Activated T-helper 1 cell treated with anti-CD3 and anti-CD28 coated beads, Interleukin-12 subunit alpha, Interleukin-12 subunit beta, Interleukin-2, Interleukin-4 antibody, amounts not matched to agents 30 ng/mL and 10 ng/mL and 1 ng/mL, durations not matched to agents 14 hours and 24 hours and 36 hours (primary cell): ENCODE measurements at regions of chr7 and their contacts with region 1.

Region 1: GRCh38 chr7:87876040-87876868 is at the starts of genes DBF4 and SLC25A40:
- DNase-seq: peak; percentile 95
- H3K4me3 Mint-ChIP-seq: peak within 1 kb of the TSS; percentile 80
- H3K27ac Mint-ChIP-seq: peak within 1 kb of the TSS; percentile 98
- H3K4me1 Mint-ChIP-seq: peaks cover 54% of the 10 kb centered on the region
- H3K27me3 Mint-ChIP-seq: no peaks in the 10 kb centered on the region
- total RNA-seq, gene DBF4: 68.6 and 76.6 TPM in 2 replicates
- total RNA-seq, gene SLC25A40: 41.9 and 51.4 TPM in 2 replicates

Region 2: GRCh38 chr7:87059525-87060287 is 816.5 kb before region 1 on chr7 and contains the start of gene ELAPOR2:
- intact Hi-C with region 1: loop called (anchors 10 kb)
- DNase-seq: peak; percentile 70
- H3K4me3 Mint-ChIP-seq: peak within 1 kb of the TSS; percentile 70
- H3K27ac Mint-ChIP-seq: peak within 1 kb of the TSS; percentile 20
- H3K4me1 Mint-ChIP-seq: peaks cover 8% of the 10 kb centered on the region
- H3K27me3 Mint-ChIP-seq: peaks cover 17% of the 10 kb centered on the region
- total RNA-seq, gene ELAPOR2: 1.3 and 2.3 TPM in 2 replicates

Region 3: DNA sequence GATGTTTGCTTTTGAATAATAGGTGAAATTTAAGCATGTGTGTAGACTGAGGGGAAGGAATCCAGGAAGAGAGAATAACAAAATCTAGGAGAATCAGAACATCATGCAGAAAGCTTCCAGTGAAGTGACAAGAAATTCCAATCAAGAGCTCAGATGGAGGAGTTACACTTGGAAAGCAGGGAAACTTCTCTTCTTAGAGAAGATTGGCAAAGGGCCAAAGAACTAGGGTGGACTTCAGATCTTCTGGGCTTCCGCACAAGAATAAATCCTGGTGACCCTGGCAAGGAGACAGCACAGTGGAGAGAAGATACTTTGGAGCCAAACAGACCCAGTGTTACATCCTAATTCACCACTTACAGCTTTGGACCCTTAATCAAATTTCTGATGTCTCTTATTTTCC is 624.1 kb before region 1 on chr7:
- intact Hi-C with region 1: no loop called
- DNase-seq: no peak
- H3K4me3 Mint-ChIP-seq: no peak overlapping the region
- H3K27ac Mint-ChIP-seq: no peak overlapping the region
- H3K4me1 Mint-ChIP-seq: no peaks in the 10 kb centered on the region
- H3K27me3 Mint-ChIP-seq: peaks cover 9% of the 10 kb centered on the region

Region 4: DNA sequence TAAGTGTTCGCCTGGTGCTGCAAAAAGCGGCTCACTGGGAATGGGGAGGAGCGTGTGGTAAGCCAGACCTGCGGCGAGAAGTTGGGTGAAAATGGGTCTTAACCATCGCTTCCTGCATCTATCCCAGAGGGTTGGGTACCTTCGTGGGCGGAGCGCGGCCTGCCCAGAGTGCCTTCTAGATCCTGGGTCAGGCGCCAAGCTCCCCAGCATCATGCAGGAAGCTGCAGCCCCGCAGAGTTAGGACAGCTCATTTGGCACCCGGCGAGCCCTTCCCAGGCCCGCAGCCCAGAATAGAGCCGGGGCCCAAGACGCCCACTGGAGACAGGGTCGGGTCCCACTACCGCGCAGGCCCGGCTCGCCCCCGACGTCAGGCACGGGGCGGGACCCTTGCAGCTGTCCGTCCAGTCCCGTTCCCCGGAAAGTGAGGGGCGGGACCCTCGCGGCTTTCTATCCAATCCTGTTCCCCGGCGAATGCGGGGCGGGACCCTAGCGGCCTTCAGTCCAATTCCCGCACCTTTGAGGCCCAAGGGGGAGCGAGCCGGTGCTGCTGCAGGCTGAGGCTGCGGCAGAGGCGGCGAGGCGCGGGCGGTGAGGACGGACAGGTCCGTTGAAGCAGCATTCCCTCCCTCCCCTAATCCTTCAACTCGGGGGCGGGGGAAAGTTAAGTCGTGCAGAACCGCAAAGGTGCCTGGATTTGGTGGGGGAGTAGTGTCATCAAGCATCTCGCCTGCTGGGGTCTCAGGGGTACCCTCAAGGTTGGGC is 530.9 kb before region 1 on chr7 and contains the start of gene CROT:
- intact Hi-C with region 1: loop called (anchors 1 kb)
- DNase-seq: peak; percentile 93
- H3K4me3 Mint-ChIP-seq: peak within 1 kb of the TSS; percentile 92
- H3K27ac Mint-ChIP-seq: peak within 1 kb of the TSS; percentile 89
- H3K4me1 Mint-ChIP-seq: peaks cover 57% of the 10 kb centered on the region
- H3K27me3 Mint-ChIP-seq: peaks cover 1% of the 10 kb centered on the region
- total RNA-seq, gene CROT: 5.9 and 6.5 TPM in 2 replicates

Region 5: GRCh38 chr7:87837597-87837996 is 38.7 kb before region 1 on chr7:
- intact Hi-C with region 1: loop called (anchors 2 kb)
- DNase-seq: no peak
- H3K4me3 Mint-ChIP-seq: no peak overlapping the region
- H3K27ac Mint-ChIP-seq: no peak overlapping the region
- H3K4me1 Mint-ChIP-seq: no peaks in the 10 kb centered on the region
- H3K27me3 Mint-ChIP-seq: no peaks in the 10 kb centered on the region

Region 6: GRCh38 chr7:87933945-87934698 is 57.9 kb after region 1 on chr7 and contains the start of gene ADAM22:
- intact Hi-C with region 1: loop called (anchors 1 kb)
- DNase-seq: peak; percentile 66
- H3K4me3 Mint-ChIP-seq: peak within 1 kb of the TSS; percentile 90
- H3K27ac Mint-ChIP-seq: peak within 1 kb of the TSS; percentile 40
- H3K4me1 Mint-ChIP-seq: peaks cover 6% of the 10 kb centered on the region
- H3K27me3 Mint-ChIP-seq: peaks cover 29% of the 10 kb centered on the region
- total RNA-seq, gene ADAM22: 1.4 and 1.5 TPM in 2 replicates

Region 7: DNA sequence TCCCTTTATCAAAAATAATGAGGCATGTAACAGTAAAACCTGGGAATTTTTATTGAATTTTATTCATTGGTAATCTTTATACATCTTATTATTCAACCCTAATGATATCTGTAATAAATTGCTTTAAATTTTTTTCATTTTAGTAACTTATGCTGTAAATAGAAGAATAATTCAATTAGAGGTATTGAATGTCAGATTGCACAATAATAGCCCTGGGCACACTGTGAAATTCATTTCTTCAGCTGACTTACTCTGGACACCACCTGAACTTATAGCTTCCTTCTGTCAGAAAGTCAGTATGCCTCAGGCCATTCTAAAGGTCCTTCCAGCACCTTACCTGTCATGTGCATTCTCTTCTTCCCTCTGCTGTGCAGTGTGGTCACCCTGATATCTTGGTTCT is 117.0 kb after region 1 on chr7:
- intact Hi-C with region 1: no loop called
- DNase-seq: no peak
- H3K4me3 Mint-ChIP-seq: no peak overlapping the region
- H3K27ac Mint-ChIP-seq: no peak overlapping the region
- H3K4me1 Mint-ChIP-seq: no peaks in the 10 kb centered on the region
- H3K27me3 Mint-ChIP-seq: no peaks in the 10 kb centered on the region

Region 8: GRCh38 chr7:89002981-89003956 is 1127.0 kb after region 1 on chr7:
- intact Hi-C with region 1: loop called (anchors 5 kb)
- DNase-seq: no peak
- H3K4me3 Mint-ChIP-seq: peak overlapping the region; percentile 77
- H3K27ac Mint-ChIP-seq: peak overlapping the region; percentile 84
- H3K4me1 Mint-ChIP-seq: peaks cover 17% of the 10 kb centered on the region
- H3K27me3 Mint-ChIP-seq: peaks cover 6% of the 10 kb centered on the region